ENCODE measurements at regions of chr11 and their contacts with region 1.

Region 1: GRCh38 chr11:7892840-7893254 is 38.2 kb downstream of the OR10A6 start:
- DNase-seq: no peak
- ATAC-seq: no peak

Region 2: GRCh38 chr11:7986768-7987559 is 94.1 kb after region 1 on chr11 and contains the start of gene EIF3F:
- intact Hi-C with region 1: loop called (anchors 2 kb)
- DNase-seq: peak; percentile 89
- ATAC-seq: peak; percentile 100
- total RNA-seq, gene EIF3F: 155 TPM

Region 3: DNA sequence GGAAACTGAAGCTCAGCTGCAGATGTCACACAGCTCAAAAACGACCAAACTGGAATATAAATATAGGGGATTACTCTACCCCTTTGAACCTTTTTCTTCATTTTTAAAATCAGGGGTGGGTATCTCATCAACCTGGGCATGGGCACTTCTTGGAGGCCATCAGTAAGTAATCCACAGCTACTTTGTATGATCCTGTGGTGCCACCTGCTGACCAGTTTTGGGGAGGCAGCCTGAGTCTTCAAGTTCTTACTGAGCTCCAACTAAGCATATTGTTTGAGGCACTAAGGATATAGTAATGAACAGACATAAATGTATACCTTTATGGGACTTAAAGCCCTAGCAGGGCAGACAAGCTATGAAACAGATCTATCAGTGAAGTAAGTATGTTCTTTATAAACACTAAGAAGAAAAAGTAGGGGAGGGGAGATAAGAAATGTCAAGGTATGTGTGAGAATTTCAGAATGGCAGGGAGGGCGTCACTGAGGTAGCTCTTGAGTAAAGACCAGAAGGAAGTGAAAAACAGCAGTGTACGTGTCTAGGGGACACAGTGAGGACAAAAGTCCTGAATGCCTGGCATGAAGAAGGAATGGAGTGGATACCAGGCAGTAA is 206.5 kb after region 1 on chr11:
- intact Hi-C with region 1: loop called (anchors 5 kb)
- DNase-seq: no peak
- ATAC-seq: peak; percentile 48

Measured in Right ventricle myocardium inferior (tissue), 1 donor.